ENCODE measurements at regions of chr5 and their contacts with region 1.

Region 1: GRCh38 chr5:51860532-51861018 is 477.3 kb downstream of the ISL1 start:
- DNase-seq: peak; percentile 82
- ATAC-seq: peak; percentile 96
- H3K4me3 ChIP-seq: no peak overlapping the region
- H3K27ac ChIP-seq: peak overlapping the region; percentile 68
- H3K4me1 ChIP-seq: peaks cover 16% of the 10 kb centered on the region
- H3K27me3 ChIP-seq: no peaks in the 10 kb centered on the region
- CTCF ChIP-seq: no peak

Region 2: GRCh38 chr5:51829691-51830090 is 30.9 kb before region 1 on chr5:
- CTCF ChIA-PET with region 1: no interaction called
- POLR2A ChIA-PET with region 1: no interaction called
- intact Hi-C with region 1: loop called (anchors 2 kb)
- DNase-seq: peak; percentile 65
- ATAC-seq: peak; percentile 27
- H3K4me3 ChIP-seq: peak overlapping the region; percentile 54; the same call in 1 of the 2 replicates
- H3K27ac ChIP-seq: peak overlapping the region; percentile 85
- H3K4me1 ChIP-seq: peaks cover 27% of the 10 kb centered on the region
- H3K27me3 ChIP-seq: no peaks in the 10 kb centered on the region
- CTCF ChIP-seq: no peak

Region 3: GRCh38 chr5:51892680-51893079 is 32.1 kb after region 1 on chr5:
- CTCF ChIA-PET with region 1: no interaction called
- POLR2A ChIA-PET with region 1: no interaction called
- intact Hi-C with region 1: loop called (anchors 2 kb)
- DNase-seq: peak; percentile 64
- ATAC-seq: peak; percentile 78
- H3K4me3 ChIP-seq: no peak overlapping the region
- H3K27ac ChIP-seq: peak overlapping the region; percentile 71
- H3K4me1 ChIP-seq: peaks cover 22% of the 10 kb centered on the region
- H3K27me3 ChIP-seq: no peaks in the 10 kb centered on the region
- CTCF ChIP-seq: no peak

Region 4: GRCh38 chr5:51997949-51998348 is 137.4 kb after region 1 on chr5:
- CTCF ChIA-PET with region 1: no interaction called
- POLR2A ChIA-PET with region 1: no interaction called
- intact Hi-C with region 1: no loop called
- DNase-seq: peak; percentile 24
- ATAC-seq: peak; percentile 79
- H3K4me3 ChIP-seq: no peak overlapping the region
- H3K27ac ChIP-seq: no peak overlapping the region
- H3K4me1 ChIP-seq: 0 out of 2 replicates have a peak, but pooled peaks cover 3% of the 10 kb centered on the region
- H3K27me3 ChIP-seq: no peaks in the 10 kb centered on the region
- CTCF ChIP-seq: no peak

Measured in PC-3 (cell line).